ENCODE measurements at regions of chr22 and their contacts with region 1.

Region 1: GRCh38 chr22:48492366-48493320 is 1335.0 kb downstream of the BRD1 start:
- DNase-seq: peak in 4 of 14 experiments; percentile 10 to 32 (median 30)
- ATAC-seq: no peak
- H3K4me3 ChIP-seq: no peak overlapping the region
- H3K4me3 Mint-ChIP-seq: no peak overlapping the region
- H3K27ac ChIP-seq: no peak overlapping the region
- H3K27ac Mint-ChIP-seq: no peak overlapping the region
- H3K4me1 ChIP-seq: no peaks in the 10 kb centered on the region
- H3K4me1 Mint-ChIP-seq: no peaks in the 10 kb centered on the region
- H3K27me3 ChIP-seq: peaks cover 30 to 45% of the 10 kb centered on the region in 2 experiments
- H3K27me3 Mint-ChIP-seq: peaks cover 53% of the 10 kb centered on the region
- CTCF ChIP-seq: no peak

Region 2: DNA sequence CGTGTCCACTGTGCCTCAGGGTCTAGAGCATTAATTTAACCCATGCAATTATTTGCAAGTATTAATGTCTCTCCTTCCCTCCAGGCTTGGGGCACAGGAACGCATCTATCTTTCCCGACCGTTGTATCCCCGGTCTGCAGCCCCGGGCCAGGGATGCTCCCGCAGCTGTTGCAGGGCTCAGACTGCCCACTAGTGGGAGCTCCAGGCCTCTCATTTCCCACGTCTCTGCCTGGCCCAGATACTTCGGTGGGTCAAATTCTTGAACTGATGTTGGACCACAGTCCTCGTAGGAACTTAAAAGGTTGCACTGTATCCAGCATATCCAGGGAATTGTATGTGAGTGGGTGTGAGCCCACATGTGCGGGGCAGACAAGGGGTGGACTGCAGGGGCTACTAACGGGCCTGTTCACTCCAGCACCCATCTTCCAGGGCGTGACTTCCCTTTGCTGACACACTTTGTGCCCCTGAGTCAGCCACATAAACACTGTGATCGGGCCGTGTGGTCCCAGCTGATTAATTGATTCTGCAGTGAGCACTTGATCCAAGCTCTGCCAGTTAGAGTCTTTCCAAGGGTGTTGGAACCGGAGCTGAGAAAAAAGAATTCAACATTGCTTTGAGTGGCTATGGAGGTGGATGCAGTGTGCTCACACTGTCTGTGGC is 1278.9 kb before region 1 on chr22:
- CTCF ChIA-PET with region 1: no interaction called
- POLR2A ChIA-PET with region 1: no interaction called
- intact Hi-C with region 1: loop called in 1 of 2 experiments (anchors 5 kb)
- DNase-seq: peak; percentile 11 to 61 (median 29)
- ATAC-seq: peak; percentile 64
- H3K4me3 ChIP-seq: no peak overlapping the region
- H3K4me3 Mint-ChIP-seq: no peak overlapping the region
- H3K27ac ChIP-seq: no peak overlapping the region
- H3K27ac Mint-ChIP-seq: no peak overlapping the region
- H3K4me1 ChIP-seq: no peaks in the 10 kb centered on the region
- H3K4me1 Mint-ChIP-seq: peaks cover 5% of the 10 kb centered on the region
- H3K27me3 ChIP-seq: no peaks in the 10 kb centered on the region
- H3K27me3 Mint-ChIP-seq: no peaks in the 10 kb centered on the region
- CTCF ChIP-seq: peak; percentile 73

Measured in CD4-positive, alpha-beta T cell (primary cell).